ENCODE measurements at regions of chr2 and their contacts with region 1.

Region 1: DNA sequence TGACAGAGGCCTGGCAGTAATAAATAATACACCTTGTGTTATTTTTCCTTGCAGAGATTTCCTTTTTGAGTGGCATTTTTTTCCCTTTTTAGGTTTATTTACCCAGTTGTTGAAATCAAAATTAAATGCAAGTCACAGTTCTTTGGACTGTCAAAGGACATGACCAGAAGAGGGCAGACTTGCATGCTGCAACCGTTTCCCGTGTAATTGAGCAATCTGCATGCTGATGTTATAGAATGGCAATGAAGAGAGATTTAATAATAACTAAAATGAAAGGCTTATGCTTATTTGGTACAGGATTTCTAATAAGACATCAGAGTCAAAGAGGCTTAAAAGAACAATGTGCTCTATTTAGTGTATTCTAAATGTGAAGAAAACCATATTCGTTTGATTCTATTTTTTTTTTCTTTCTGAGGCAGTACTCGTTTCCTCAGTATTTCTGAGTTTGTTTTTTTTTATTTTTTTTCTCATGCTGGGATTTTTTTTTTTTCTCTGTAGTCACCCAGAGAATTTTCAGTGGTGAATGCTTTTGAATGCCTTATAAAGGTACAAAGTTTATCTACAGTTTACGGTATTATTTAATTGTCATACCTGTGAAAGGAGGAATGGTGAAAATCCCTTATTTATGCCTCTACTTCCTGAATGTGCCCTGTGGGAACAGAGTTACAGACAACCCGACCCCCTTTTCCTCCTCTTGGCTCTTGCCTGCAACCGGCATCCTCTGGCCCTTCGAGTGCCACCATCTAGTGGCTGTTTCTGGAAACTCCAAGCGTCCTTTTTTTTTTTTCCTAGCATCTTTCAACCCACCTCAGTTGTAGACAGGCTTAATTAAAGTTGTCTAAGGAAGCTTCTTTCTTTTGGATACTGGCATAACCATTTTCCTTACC is 368.5 kb downstream of the LRRTM1 start:
- DNase-seq: peak; percentile 38 to 87 (median 68)
- H3K4me3 ChIP-seq: peak overlapping the region in 57 of 59 donors; percentile 1 to 64 (median 38)
- H3K27ac ChIP-seq: peak overlapping the region in 51 of 59 donors; percentile 5 to 86 (median 70)
- H3K27me3 ChIP-seq: no peaks in the 10 kb centered on the region
- CTCF ChIP-seq: peak; percentile 40 to 83 (median 71)

Region 2: DNA sequence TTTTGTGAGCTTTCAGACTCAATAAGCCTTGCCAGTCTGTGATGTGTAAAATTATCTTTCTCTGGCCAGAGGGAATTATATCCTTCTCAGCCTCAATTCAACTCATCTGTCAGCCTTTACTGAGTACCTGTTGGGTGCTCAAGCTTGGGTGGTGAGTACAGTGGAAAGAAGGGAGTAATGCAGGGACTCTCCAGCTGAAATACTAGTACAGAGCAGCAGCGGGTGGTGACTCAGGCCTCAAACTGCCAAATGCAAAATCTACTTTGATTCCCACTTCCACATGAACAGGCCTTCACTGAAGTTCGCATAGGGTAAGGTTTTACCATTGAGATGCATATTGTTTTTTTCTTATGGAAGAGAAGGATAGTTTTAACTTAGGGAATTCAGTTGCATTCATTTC is 41.8 kb after region 1 on chr2:
- intact Hi-C with region 1: loop called in 1 of 2 experiments (anchors 2 kb)
- DNase-seq: no peak
- H3K4me3 ChIP-seq: no peak overlapping the region
- H3K27ac ChIP-seq: peak overlapping the region in 10 of 59 donors; percentile 1 to 90 (median 22)
- H3K27me3 ChIP-seq: no peaks in the 10 kb centered on the region
- CTCF ChIP-seq: no peak

Region 3: GRCh38 chr2:79984476-79984875 is 48.5 kb after region 1 on chr2:
- intact Hi-C with region 1: loop called (anchors 2 kb)
- DNase-seq: no peak
- H3K4me3 ChIP-seq: no peak overlapping the region
- H3K27ac ChIP-seq: no peak overlapping the region
- H3K27me3 ChIP-seq: no peaks in the 10 kb centered on the region
- CTCF ChIP-seq: no peak

Region 4: GRCh38 chr2:80073134-80073561 is 137.1 kb after region 1 on chr2:
- intact Hi-C with region 1: loop called in 1 of 2 experiments (anchors 10 kb)
- DNase-seq: peak in 3 of 10 donors; percentile 30 to 44 (median 42)
- H3K4me3 ChIP-seq: no peak overlapping the region
- H3K27ac ChIP-seq: peak overlapping the region in 1 of 59 donors; percentile 13
- H3K27me3 ChIP-seq: no peaks in the 10 kb centered on the region
- CTCF ChIP-seq: peak; percentile 52 to 87 (median 78)

Region 5: GRCh38 chr2:80238692-80239469 is 302.9 kb after region 1 on chr2:
- intact Hi-C with region 1: loop called in 1 of 2 experiments (anchors 5 kb)
- DNase-seq: peak in 4 of 10 donors; percentile 36 to 58 (median 46)
- H3K4me3 ChIP-seq: no peak overlapping the region
- H3K27ac ChIP-seq: no peak overlapping the region
- H3K27me3 ChIP-seq: no peaks in the 10 kb centered on the region
- CTCF ChIP-seq: peak; percentile 49 to 83 (median 72)